MCF 10A (cell line): ENCODE measurements at regions of chr4 and their contacts with region 1.

Region 1: GRCh38 chr4:74570095-74570494 is 125.2 kb downstream of the AREG start:
- DNase-seq: no peak
- H3K4me3 Mint-ChIP-seq: no peak overlapping the region
- H3K27ac Mint-ChIP-seq: no peak overlapping the region
- H3K4me1 Mint-ChIP-seq: no peaks in the 10 kb centered on the region
- H3K27me3 Mint-ChIP-seq: no peaks in the 10 kb centered on the region
- CTCF ChIP-seq: no peak

Region 2: GRCh38 chr4:73740353-73740778 is 829.7 kb before region 1 on chr4 and contains the start of gene CXCL8:
- CTCF ChIA-PET with region 1: no interaction called
- POLR2A ChIA-PET with region 1: no interaction called
- intact Hi-C with region 1: no loop called
- DNase-seq: peak; percentile 99
- H3K4me3 Mint-ChIP-seq: peak within 1 kb of the TSS; percentile 70
- H3K27ac Mint-ChIP-seq: peak within 1 kb of the TSS; percentile 56
- H3K4me1 Mint-ChIP-seq: peaks cover 18% of the 10 kb centered on the region
- H3K27me3 Mint-ChIP-seq: no peaks in the 10 kb centered on the region
- CTCF ChIP-seq: no peak
- total RNA-seq, gene CXCL8: 17.0 and 36.2 TPM in 2 replicates

Region 3: DNA sequence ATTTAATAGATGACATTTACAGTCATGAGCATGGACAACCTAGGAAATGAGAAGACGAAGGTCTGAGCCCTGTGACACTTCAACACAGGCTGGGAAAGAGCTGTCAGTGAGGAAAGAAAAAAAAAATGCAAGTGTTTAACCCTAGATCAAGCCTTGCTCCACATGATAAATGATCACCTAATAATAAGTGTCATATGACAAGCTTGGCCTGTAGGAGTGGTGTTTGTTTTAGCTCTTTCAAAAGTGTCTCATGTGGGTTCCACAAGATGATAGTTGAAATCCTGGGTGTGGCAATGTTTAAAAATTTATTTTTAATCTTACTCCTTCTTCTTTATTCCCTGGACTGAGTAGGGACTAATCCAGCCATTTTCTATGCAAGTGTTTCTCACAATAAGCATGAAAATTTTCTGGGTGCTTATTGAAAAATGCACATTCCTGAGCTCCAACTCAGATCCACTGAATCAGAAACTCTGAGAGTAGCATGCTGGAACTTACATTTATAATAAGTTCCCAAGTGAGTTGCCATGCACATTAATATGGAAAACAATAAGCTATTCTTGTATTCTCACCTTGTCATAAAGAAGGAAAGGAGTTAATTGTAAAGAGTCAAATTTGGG is 13.1 kb after region 1 on chr4:
- CTCF ChIA-PET with region 1: no interaction called
- POLR2A ChIA-PET with region 1: interaction called, 13 read pairs
- intact Hi-C with region 1: no loop called
- DNase-seq: peak; percentile 9
- H3K4me3 Mint-ChIP-seq: no peak overlapping the region
- H3K27ac Mint-ChIP-seq: peak overlapping the region; percentile 79
- H3K4me1 Mint-ChIP-seq: peaks cover 23% of the 10 kb centered on the region
- H3K27me3 Mint-ChIP-seq: no peaks in the 10 kb centered on the region
- CTCF ChIP-seq: no peak

Region 4: GRCh38 chr4:75056277-75056676 is 486.2 kb after region 1 on chr4:
- CTCF ChIA-PET with region 1: no interaction called
- POLR2A ChIA-PET with region 1: no interaction called
- intact Hi-C with region 1: no loop called
- DNase-seq: no peak
- H3K4me3 Mint-ChIP-seq: no peak overlapping the region
- H3K27ac Mint-ChIP-seq: no peak overlapping the region
- H3K4me1 Mint-ChIP-seq: no peaks in the 10 kb centered on the region
- H3K27me3 Mint-ChIP-seq: no peaks in the 10 kb centered on the region
- CTCF ChIP-seq: no peak